CD8-positive, alpha-beta T cell (primary cell): ENCODE measurements at regions of chrX and their contacts with region 1.

Region 1: GRCh38 chrX:129606918-129607317 is 47.8 kb downstream of the APLN start:
- DNase-seq: peak; percentile 9 to 72 (median 60)
- ATAC-seq: peak; percentile 63
- H3K4me3 ChIP-seq: no peak overlapping the region
- H3K4me3 Mint-ChIP-seq: no peak overlapping the region
- H3K27ac ChIP-seq: no peak overlapping the region
- H3K27ac Mint-ChIP-seq: no peak overlapping the region
- H3K4me1 ChIP-seq: peaks cover 15% of the 10 kb centered on the region
- H3K4me1 Mint-ChIP-seq: peaks cover 19% of the 10 kb centered on the region
- H3K27me3 ChIP-seq: no peaks in the 10 kb centered on the region
- H3K27me3 Mint-ChIP-seq: no peaks in the 10 kb centered on the region
- CTCF ChIP-seq: peak; percentile 54

Region 2: GRCh38 chrX:129478516-129478915 is 128.4 kb before region 1 on chrX:
- CTCF ChIA-PET with region 1: no interaction called
- POLR2A ChIA-PET with region 1: no interaction called
- intact Hi-C with region 1: no loop called
- DNase-seq: no peak
- ATAC-seq: no peak
- H3K4me3 ChIP-seq: no peak overlapping the region
- H3K4me3 Mint-ChIP-seq: no peak overlapping the region
- H3K27ac ChIP-seq: no peak overlapping the region
- H3K27ac Mint-ChIP-seq: no peak overlapping the region
- H3K4me1 ChIP-seq: no peaks in the 10 kb centered on the region
- H3K4me1 Mint-ChIP-seq: no peaks in the 10 kb centered on the region
- H3K27me3 ChIP-seq: no peaks in the 10 kb centered on the region
- H3K27me3 Mint-ChIP-seq: no peaks in the 10 kb centered on the region
- CTCF ChIP-seq: no peak

Region 3: GRCh38 chrX:129737916-129738315 is 131.0 kb after region 1 on chrX:
- CTCF ChIA-PET with region 1: no interaction called
- POLR2A ChIA-PET with region 1: no interaction called
- intact Hi-C with region 1: no loop called
- DNase-seq: no peak
- ATAC-seq: no peak
- H3K4me3 ChIP-seq: no peak overlapping the region
- H3K4me3 Mint-ChIP-seq: no peak overlapping the region
- H3K27ac ChIP-seq: no peak overlapping the region
- H3K27ac Mint-ChIP-seq: no peak overlapping the region
- H3K4me1 ChIP-seq: peaks cover 17% of the 10 kb centered on the region
- H3K4me1 Mint-ChIP-seq: peaks cover 22% of the 10 kb centered on the region
- H3K27me3 ChIP-seq: no peaks in the 10 kb centered on the region
- H3K27me3 Mint-ChIP-seq: no peaks in the 10 kb centered on the region
- CTCF ChIP-seq: no peak

Region 4: DNA sequence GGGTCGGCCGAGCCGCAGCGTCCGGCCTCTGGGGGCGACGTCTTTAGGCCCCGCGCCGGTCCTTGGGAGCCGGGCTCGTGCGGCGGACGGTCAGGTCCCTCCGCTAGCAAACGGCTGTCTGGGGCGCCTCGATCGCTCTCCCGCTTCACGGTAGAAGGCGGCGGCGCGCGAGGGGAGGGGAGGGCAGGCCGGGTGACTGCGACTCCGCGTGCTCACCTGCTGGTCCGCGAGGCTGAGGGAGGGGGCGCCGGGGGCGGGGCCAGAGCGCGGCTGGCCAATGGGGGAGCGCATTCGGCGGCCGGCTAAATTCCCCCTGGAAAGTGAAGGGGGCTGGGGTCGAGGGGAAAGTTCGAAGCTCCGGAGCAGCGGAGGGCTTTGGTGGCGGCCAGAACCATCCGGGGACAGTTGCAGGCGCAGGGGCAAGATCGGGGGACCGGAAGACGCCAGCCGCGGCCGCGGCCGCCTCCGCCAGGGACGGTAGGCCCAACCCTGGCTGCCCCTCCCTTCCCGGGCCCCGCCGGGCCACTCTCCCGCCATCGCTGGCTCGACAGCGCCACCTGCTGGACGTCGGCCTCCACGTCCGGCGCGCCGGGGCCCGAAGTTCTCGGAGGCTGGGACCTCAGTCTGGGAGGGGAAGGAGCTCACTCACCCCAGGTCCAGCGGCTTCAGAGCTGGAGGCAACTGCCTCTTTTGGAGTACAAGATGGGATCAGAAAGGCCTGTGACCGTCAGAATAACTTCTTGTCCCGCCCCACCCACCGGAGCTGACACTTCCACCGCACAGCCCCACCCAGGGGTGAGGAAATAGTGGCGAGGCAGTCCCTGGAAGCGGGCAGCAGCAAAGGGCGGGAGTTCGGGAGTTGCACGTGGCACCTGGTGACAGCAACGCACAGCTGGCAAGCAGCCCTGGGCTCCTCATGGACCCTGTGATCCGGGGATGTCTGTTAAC is 453.5 kb after region 1 on chrX:
- CTCF ChIA-PET with region 1: interaction called, 8 read pairs
- POLR2A ChIA-PET with region 1: no interaction called
- intact Hi-C with region 1: loop called (anchors 1 to 2 kb)
- DNase-seq: peak; percentile 54 to 91 (median 80)
- ATAC-seq: peak; percentile 87
- H3K4me3 ChIP-seq: peak overlapping the region; percentile 48 to 53
- H3K4me3 Mint-ChIP-seq: peak overlapping the region; percentile 66
- H3K27ac ChIP-seq: no peak overlapping the region
- H3K27ac Mint-ChIP-seq: no peak overlapping the region
- H3K4me1 ChIP-seq: peaks cover 7% of the 10 kb centered on the region
- H3K4me1 Mint-ChIP-seq: peaks cover 12% of the 10 kb centered on the region
- H3K27me3 ChIP-seq: no peaks in the 10 kb centered on the region
- H3K27me3 Mint-ChIP-seq: no peaks in the 10 kb centered on the region
- CTCF ChIP-seq: peak; percentile 67

Region 5: DNA sequence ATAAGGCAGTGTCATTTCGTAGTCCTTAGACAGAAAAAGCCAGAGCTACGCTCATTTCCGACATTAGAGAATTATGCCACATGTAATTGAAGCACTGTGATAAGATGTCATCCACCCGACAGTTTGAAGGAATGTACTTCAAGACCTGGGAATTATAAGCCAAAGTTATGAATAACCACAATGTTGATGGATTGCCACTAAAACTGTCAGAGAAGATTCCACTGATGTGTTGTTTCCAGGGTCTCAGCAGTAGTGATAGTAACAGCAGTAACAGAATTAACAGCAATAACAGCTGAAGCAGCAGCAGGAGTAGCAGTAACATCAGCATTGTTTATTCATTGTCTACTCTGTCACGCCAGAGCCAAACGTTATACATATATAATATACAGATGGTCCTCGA is 589.5 kb after region 1 on chrX:
- CTCF ChIA-PET with region 1: no interaction called
- POLR2A ChIA-PET with region 1: no interaction called
- intact Hi-C with region 1: loop called (anchors 2 to 5 kb)
- DNase-seq: no peak
- ATAC-seq: no peak
- H3K4me3 ChIP-seq: no peak overlapping the region
- H3K4me3 Mint-ChIP-seq: no peak overlapping the region
- H3K27ac ChIP-seq: no peak overlapping the region
- H3K27ac Mint-ChIP-seq: no peak overlapping the region
- H3K4me1 ChIP-seq: no peaks in the 10 kb centered on the region
- H3K4me1 Mint-ChIP-seq: peaks cover 2% of the 10 kb centered on the region
- H3K27me3 ChIP-seq: no peaks in the 10 kb centered on the region
- H3K27me3 Mint-ChIP-seq: no peaks in the 10 kb centered on the region
- CTCF ChIP-seq: no peak